Panc1 (cell line): ENCODE measurements at regions of chr2 and their contacts with region 1.

Region 1: DNA sequence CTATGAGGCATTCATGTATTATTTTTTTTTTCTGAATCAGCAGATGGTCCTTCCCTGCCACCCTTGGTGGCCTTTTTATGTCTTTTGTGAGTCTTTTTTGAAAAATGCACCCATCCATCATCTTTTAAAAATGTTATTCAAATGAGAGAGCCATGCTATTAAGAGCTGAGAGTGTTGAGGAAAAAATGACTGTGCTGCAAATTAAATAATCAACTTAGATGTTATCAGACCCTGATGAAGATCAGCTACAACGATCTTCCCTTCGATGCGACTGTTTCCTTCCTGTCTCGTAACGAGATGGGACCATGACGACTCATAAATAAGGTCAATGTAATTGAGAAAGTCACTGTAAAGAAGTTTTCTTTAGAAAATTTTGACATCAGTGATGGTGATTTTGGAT is 44.4 kb downstream of the TRIB2 start:
- DNase-seq: no peak
- ATAC-seq: no peak
- H3K4me3 ChIP-seq: no peak overlapping the region
- H3K27ac ChIP-seq: no peak overlapping the region
- H3K4me1 ChIP-seq: no peaks in the 10 kb centered on the region
- H3K27me3 ChIP-seq: no peaks in the 10 kb centered on the region
- CTCF ChIP-seq: no peak

Region 2: GRCh38 chr2:11989354-11989703 is 771.8 kb before region 1 on chr2:
- CTCF ChIA-PET with region 1: interaction called, 13 read pairs
- POLR2A ChIA-PET with region 1: no interaction called
- in situ Hi-C with region 1: no loop called
- intact Hi-C with region 1: no loop called
- DNase-seq: no peak
- ATAC-seq: no peak
- H3K4me3 ChIP-seq: no peak overlapping the region
- H3K27ac ChIP-seq: no peak overlapping the region
- H3K4me1 ChIP-seq: no peaks in the 10 kb centered on the region
- H3K27me3 ChIP-seq: no peaks in the 10 kb centered on the region
- CTCF ChIP-seq: no peak